B cell (primary cell): ENCODE measurements at regions of chr1 and their contacts with region 1.

Region 1: DNA sequence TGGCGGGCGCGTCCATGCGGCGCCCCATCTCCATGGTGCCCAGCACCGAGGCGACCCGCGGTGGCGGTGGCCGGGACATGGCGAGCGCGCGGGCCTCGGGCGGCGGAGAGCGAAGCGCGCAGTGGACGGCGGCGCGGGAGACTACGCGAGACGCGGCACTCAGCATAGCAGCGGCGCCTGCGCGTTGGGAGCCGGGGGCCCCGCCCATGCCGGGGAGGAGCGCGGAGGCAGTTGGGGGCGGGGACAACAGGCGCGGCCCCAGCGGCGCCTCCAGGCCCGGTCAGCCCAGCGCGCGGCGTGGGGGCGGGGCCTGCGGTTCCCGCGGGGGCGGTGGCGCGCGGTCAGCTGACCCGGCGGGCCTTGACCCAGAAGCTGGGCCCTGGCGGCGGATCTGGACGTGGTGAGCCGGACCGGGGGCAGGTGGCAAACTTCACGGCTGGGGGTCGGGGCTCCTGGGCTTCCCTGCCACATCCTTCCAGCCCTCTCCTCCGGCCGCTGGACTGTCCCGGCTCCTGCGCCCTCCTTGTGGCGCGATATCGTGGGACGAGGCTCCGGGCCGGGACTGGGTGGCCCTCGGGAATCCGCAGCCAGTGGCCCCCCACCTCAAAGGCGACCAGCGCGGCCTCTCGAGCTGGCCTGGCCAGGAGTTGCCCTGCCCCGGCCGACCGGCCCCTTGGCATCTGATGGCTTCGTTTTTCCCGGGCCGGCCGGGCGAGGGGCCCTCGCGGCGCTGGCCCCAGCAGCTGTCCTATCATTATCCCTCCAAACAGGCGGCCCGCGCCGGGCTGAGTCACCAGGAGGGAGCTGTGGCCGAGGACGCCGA is at the starts of genes AKR7A2 and SLC66A1:
- DNase-seq: peak; percentile 93
- ATAC-seq: peak; percentile 89
- H3K4me3 ChIP-seq: peak within 1 kb of the TSS; percentile 26 to 91 (median 79)
- H3K4me3 Mint-ChIP-seq: peak within 1 kb of the TSS; percentile 88
- H3K27ac ChIP-seq: peak within 1 kb of the TSS; percentile 65 to 90
- H3K27ac Mint-ChIP-seq: peak within 1 kb of the TSS; percentile 75
- H3K4me1 ChIP-seq: peaks cover 55 to 58% of the 10 kb centered on the region in 2 donors
- H3K4me1 Mint-ChIP-seq: peaks cover 57% of the 10 kb centered on the region
- H3K27me3 ChIP-seq: no peaks in the 10 kb centered on the region
- H3K27me3 Mint-ChIP-seq: no peaks in the 10 kb centered on the region
- CTCF ChIP-seq: no peak
- total RNA-seq, gene AKR7A2: 32.1 and 36.9 TPM in 2 replicates
- total RNA-seq, gene SLC66A1: 24.4 and 26.4 TPM in 2 replicates

Region 2: DNA sequence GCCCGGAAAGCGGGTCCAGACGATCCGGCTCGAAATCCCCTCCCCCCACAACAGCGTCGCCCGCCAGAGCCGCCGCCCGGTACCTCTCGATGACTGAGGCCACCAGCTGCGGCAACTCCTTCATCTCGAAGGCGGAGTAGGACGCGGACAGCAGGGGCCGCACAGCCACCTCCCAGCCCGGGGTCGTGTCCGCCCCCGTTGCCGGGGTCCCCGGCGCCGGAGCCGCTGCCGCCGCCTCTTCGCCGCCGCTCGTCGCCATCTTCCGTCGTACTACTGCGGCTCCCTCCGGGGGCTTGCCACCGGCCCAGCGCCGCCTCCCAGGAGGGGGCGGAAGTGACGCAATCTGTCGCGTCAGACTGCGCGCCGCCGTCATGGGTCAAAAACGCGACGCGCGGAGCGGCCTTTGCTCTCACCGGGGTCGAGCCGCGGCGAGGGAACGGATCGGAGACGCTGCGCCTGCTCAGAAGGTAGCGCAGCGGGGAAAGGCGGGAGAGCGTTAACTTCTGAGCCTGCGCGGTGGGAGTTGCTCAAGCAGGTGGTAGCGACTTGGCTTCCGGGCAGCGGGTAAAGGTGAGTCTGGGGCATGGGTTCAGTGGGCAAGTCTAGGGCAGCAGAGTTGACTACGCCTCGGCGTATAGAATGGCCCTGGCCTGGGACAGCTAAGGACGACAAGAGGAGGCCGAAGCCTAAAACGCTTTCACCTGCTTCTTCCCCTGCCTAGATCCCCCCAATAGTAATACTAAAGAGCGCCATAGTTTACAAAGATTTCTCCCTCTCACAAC is 102.0 kb before region 1 on chr1 and contains the start of gene UBR4:
- CTCF ChIA-PET with region 1: no interaction called
- POLR2A ChIA-PET with region 1: no interaction called
- intact Hi-C with region 1: loop called (anchors 1 kb)
- DNase-seq: peak; percentile 98
- ATAC-seq: peak; percentile 87
- H3K4me3 ChIP-seq: peak within 1 kb of the TSS; percentile 79 to 93 (median 88)
- H3K4me3 Mint-ChIP-seq: peak within 1 kb of the TSS; percentile 93
- H3K27ac ChIP-seq: peak within 1 kb of the TSS; percentile 89 to 94
- H3K27ac Mint-ChIP-seq: peak within 1 kb of the TSS; percentile 94
- H3K4me1 ChIP-seq: peaks cover 32 to 37% of the 10 kb centered on the region in 2 donors
- H3K4me1 Mint-ChIP-seq: peaks cover 58% of the 10 kb centered on the region
- H3K27me3 ChIP-seq: no peaks in the 10 kb centered on the region
- H3K27me3 Mint-ChIP-seq: no peaks in the 10 kb centered on the region
- CTCF ChIP-seq: no peak
- total RNA-seq, gene UBR4: 190 and 205 TPM in 2 replicates

Region 3: DNA sequence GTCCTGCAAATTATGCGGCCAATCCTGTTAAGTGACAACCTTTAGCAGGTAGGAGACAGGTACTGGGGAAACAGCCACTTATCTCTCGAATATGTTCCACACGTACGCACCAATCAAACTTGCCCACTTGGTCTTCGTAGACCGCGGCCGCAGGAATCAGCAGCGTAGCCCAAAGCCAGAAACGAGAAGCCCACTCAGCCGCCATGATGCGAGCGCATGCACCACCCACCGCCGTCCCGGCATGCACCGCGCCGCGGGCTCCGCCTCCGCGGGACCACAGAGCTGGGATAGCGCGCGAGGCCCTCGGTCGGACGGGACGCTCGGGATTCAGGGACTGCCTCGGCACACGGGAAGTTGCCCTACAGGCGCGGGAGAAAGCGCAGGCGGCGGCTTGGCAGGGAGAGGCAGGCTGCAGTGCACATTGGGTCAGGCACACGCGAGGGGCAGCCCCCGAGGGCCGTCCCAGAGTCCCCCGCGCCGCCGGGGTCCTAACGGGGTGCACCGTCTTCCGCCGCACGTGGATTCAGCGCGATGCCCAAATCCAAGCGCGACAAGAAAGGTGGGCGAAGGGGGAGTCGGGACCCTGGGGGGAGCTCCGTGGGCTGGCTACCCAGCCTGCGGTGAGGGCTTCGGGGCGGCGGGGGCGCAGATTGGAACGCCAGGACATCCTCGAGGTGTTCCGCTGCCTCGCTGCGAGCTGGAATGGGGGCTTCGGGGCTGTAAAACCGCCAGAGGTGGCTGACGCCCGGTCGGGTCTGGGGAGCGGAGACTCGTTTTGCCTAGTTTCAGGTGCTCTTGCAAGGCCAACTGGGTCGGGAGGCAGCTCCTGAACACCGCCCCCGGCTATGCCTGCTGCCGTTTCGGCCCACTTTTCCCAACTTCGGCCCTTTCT is 60.6 kb before region 1 on chr1 and contains the starts of genes EMC1 and MRTO4:
- CTCF ChIA-PET with region 1: no interaction called
- POLR2A ChIA-PET with region 1: no interaction called
- intact Hi-C with region 1: loop called (anchors 1 kb)
- DNase-seq: peak; percentile 93
- ATAC-seq: peak; percentile 94
- H3K4me3 ChIP-seq: peak within 1 kb of the TSS; percentile 46 to 82 (median 79)
- H3K4me3 Mint-ChIP-seq: peak within 1 kb of the TSS; percentile 98
- H3K27ac ChIP-seq: peak within 1 kb of the TSS; percentile 90 to 95
- H3K27ac Mint-ChIP-seq: peak within 1 kb of the TSS; percentile 97
- H3K4me1 ChIP-seq: peaks cover 21 to 37% of the 10 kb centered on the region in 2 donors
- H3K4me1 Mint-ChIP-seq: peaks cover 30% of the 10 kb centered on the region
- H3K27me3 ChIP-seq: no peaks in the 10 kb centered on the region
- H3K27me3 Mint-ChIP-seq: no peaks in the 10 kb centered on the region
- CTCF ChIP-seq: no peak
- total RNA-seq, gene EMC1: 43.3 and 45.5 TPM in 2 replicates
- total RNA-seq, gene MRTO4: 20.2 and 28.1 TPM in 2 replicates

Region 4: GRCh38 chr1:19287436-19288185 is 24.6 kb before region 1 on chr1:
- CTCF ChIA-PET with region 1: interaction called, 3 read pairs
- POLR2A ChIA-PET with region 1: no interaction called
- intact Hi-C with region 1: loop called (anchors 1 kb)
- DNase-seq: no peak
- ATAC-seq: no peak
- H3K4me3 ChIP-seq: no peak overlapping the region
- H3K4me3 Mint-ChIP-seq: peak overlapping the region; percentile 75
- H3K27ac ChIP-seq: no peak overlapping the region
- H3K27ac Mint-ChIP-seq: peak overlapping the region; percentile 37
- H3K4me1 ChIP-seq: peaks cover 5 to 6% of the 10 kb centered on the region in 2 donors
- H3K4me1 Mint-ChIP-seq: peaks cover 7% of the 10 kb centered on the region
- H3K27me3 ChIP-seq: peaks cover 0 to 8% (median 4%) of the 10 kb centered on the region in 4 experiments
- H3K27me3 Mint-ChIP-seq: peaks cover 12% of the 10 kb centered on the region
- CTCF ChIP-seq: no peak

Region 5: DNA sequence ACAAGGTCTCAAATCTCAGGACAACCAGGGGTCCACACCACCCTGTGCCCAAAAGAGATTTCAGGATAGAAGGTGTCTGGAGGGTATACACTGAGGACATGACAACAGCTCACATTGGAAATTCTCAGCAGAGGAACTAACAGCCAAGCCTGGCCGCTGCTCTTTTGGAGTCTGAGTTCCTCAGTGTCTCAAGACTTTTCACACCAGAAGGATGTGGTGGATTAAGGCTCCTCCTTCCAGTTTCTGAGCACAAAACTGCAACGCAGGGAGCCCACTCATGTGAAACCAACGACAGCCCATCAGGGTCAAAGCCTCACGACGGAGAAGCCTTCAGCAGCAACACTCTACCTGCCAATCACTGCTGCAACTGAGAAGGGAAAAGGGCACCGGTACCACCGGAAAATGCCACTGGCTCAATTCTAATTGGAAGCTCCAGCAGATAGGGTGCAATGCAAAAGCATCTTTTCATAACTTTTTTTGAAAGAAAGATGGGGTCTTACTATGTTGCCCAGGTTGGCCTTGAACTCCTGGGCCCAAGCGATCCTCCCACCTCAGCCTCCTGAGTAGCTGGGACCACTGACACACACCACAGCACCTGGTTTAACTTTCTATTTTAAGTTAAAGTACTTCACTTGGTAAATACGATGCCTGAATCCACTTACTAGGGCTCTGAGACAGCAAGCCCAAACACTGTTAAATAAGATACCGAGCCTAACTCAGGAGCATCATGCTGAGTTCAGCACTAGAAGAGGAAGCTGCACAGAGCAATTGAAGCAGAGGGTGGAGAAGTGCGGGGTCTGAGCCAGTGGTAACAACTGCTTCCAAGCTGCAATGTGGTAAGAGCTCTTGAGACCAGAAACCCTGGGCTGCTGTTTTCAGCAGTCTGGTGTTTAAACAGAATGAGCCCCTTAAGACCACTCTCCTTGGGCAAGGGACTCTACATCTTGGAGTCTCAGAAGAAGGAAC is 165.4 kb after region 1 on chr1:
- CTCF ChIA-PET with region 1: no interaction called
- POLR2A ChIA-PET with region 1: no interaction called
- intact Hi-C with region 1: loop called (anchors 5 kb)
- DNase-seq: peak; percentile 79
- ATAC-seq: peak; percentile 73
- H3K4me3 ChIP-seq: peak overlapping the region; percentile 11 to 57 (median 53)
- H3K4me3 Mint-ChIP-seq: peak overlapping the region; percentile 75
- H3K27ac ChIP-seq: peak overlapping the region; percentile 78 to 95
- H3K27ac Mint-ChIP-seq: peak overlapping the region; percentile 94
- H3K4me1 ChIP-seq: peaks cover 77 to 93% of the 10 kb centered on the region in 2 donors
- H3K4me1 Mint-ChIP-seq: peaks cover 89% of the 10 kb centered on the region
- H3K27me3 ChIP-seq: no peaks in the 10 kb centered on the region
- H3K27me3 Mint-ChIP-seq: no peaks in the 10 kb centered on the region
- CTCF ChIP-seq: no peak

Region 6: GRCh38 chr1:19596714-19597495 is 284.7 kb after region 1 on chr1:
- CTCF ChIA-PET with region 1: interaction called, 3 read pairs
- POLR2A ChIA-PET with region 1: no interaction called
- intact Hi-C with region 1: loop called (anchors 2 kb)
- DNase-seq: peak; percentile 99
- ATAC-seq: peak; percentile 92
- H3K4me3 ChIP-seq: peak overlapping the region; percentile 58 to 97 (median 80)
- H3K4me3 Mint-ChIP-seq: peak overlapping the region; percentile 98
- H3K27ac ChIP-seq: peak overlapping the region; percentile 93 to 100
- H3K27ac Mint-ChIP-seq: peak overlapping the region; percentile 99
- H3K4me1 ChIP-seq: peaks cover 22 to 30% of the 10 kb centered on the region in 2 donors
- H3K4me1 Mint-ChIP-seq: peaks cover 42% of the 10 kb centered on the region
- H3K27me3 ChIP-seq: no peaks in the 10 kb centered on the region
- H3K27me3 Mint-ChIP-seq: no peaks in the 10 kb centered on the region
- CTCF ChIP-seq: no peak

Region 7: GRCh38 chr1:19676438-19676922 is 364.3 kb after region 1 on chr1:
- CTCF ChIA-PET with region 1: no interaction called
- POLR2A ChIA-PET with region 1: no interaction called
- intact Hi-C with region 1: no loop called
- DNase-seq: no peak
- ATAC-seq: no peak
- H3K4me3 ChIP-seq: no peak overlapping the region
- H3K4me3 Mint-ChIP-seq: no peak overlapping the region
- H3K27ac ChIP-seq: no peak overlapping the region
- H3K27ac Mint-ChIP-seq: no peak overlapping the region
- H3K4me1 ChIP-seq: no peaks in the 10 kb centered on the region
- H3K4me1 Mint-ChIP-seq: no peaks in the 10 kb centered on the region
- H3K27me3 ChIP-seq: peaks cover 0 to 19% (median 1%) of the 10 kb centered on the region in 4 experiments
- H3K27me3 Mint-ChIP-seq: peaks cover 27% of the 10 kb centered on the region
- CTCF ChIP-seq: no peak